Activated CD8-positive, alpha-beta T cell treated with anti-CD3 and anti-CD28 coated beads, Interleukin-2, amount 10 ng/mL, durations not matched to agents 7 days and 5 days (primary cell): ENCODE measurements at regions of chr15 and their contacts with region 1.

Region 1: DNA sequence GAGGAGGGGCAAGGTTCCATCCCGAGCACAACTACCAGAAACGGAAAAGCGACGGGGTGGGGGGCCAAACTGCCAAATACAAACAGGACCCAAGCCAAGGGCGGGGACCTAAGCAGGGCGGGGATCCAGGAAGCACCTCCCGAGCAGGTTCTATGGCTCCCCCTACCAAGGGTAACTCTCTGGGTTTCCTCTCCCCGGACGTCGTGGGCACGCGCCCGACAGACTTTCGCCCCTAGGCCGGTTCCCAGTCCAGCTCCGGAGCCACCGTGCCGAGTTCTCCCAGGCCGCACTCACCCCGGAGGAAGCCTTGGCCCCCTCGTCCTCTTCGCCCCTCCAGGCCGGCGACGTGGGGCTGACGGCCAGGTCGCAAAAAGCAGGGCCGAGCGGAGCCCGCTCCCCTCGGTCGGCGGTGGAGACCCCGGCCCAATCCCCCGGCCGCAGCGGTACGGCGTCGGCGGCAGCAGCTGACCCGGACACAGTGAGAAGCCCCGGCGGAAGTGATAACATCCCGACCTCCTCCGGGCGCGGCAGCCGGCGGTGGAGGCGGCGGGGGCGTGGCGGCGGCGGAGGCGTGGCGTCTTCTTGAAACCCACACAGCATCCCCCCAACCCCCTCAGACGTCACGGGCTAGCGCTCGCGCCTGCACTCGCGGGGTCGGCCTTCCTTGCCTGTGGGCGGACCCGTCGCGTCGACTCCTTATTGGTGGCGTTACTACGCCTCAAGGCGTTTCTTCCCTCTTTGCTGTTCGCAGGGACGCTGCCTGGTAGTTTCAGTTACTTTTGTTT is at the start of gene BNIP2:
- DNase-seq: peak; percentile 100
- ATAC-seq: peak; percentile 94
- H3K4me3 Mint-ChIP-seq: peak within 1 kb of the TSS; percentile 88
- H3K27ac Mint-ChIP-seq: peak within 1 kb of the TSS; percentile 96
- H3K4me1 Mint-ChIP-seq: peaks cover 40% of the 10 kb centered on the region
- H3K27me3 Mint-ChIP-seq: no peaks in the 10 kb centered on the region
- total RNA-seq, gene BNIP2: 69.0 to 74.8 TPM

Region 2: GRCh38 chr15:59522988-59523461 is 166.0 kb before region 1 on chr15:
- CTCF ChIA-PET with region 1: no interaction called
- POLR2A ChIA-PET with region 1: no interaction called
- DNase-seq: peak; percentile 73
- ATAC-seq: peak; percentile 52
- H3K4me3 Mint-ChIP-seq: peak overlapping the region; percentile 22
- H3K27ac Mint-ChIP-seq: no peak overlapping the region
- H3K4me1 Mint-ChIP-seq: peaks cover 26% of the 10 kb centered on the region
- H3K27me3 Mint-ChIP-seq: peaks cover 23% of the 10 kb centered on the region

Region 3: GRCh38 chr15:59656897-59657634 is 32.0 kb before region 1 on chr15 and contains the start of gene GTF2A2:
- CTCF ChIA-PET with region 1: interaction called, 9 read pairs
- POLR2A ChIA-PET with region 1: interaction called, 33 read pairs
- DNase-seq: peak; percentile 98
- ATAC-seq: peak; percentile 99
- H3K4me3 Mint-ChIP-seq: peak within 1 kb of the TSS; percentile 12
- H3K27ac Mint-ChIP-seq: peak within 1 kb of the TSS; percentile 85
- H3K4me1 Mint-ChIP-seq: peaks cover 9% of the 10 kb centered on the region
- H3K27me3 Mint-ChIP-seq: no peaks in the 10 kb centered on the region
- total RNA-seq, gene GTF2A2: 123 to 127 TPM

Region 4: DNA sequence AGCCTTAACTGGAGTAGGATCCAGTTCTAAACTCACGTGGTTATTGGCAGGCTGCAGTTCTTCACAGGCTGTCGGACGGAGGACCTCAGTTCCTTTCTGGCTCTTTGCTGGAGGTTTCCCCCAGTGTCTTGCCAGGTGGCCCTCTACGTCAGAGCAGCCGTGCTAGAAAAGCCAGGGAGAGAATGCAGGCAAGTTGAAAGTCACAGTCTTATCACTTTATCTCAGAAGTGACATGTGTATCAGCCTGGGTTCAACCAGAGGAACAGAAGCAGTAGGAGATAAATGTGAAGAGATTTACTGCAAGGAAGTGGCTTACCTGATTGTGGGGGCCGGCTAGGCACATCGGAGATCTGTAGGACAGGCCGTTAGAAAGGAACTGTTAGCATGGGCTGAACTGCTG is 125.4 kb after region 1 on chr15:
- CTCF ChIA-PET with region 1: no interaction called
- POLR2A ChIA-PET with region 1: no interaction called
- DNase-seq: peak; percentile 59
- ATAC-seq: peak; percentile 89
- H3K4me3 Mint-ChIP-seq: no peak overlapping the region
- H3K27ac Mint-ChIP-seq: peak overlapping the region; percentile 73
- H3K4me1 Mint-ChIP-seq: peaks cover 26% of the 10 kb centered on the region
- H3K27me3 Mint-ChIP-seq: peaks cover 6% of the 10 kb centered on the region

Region 5: DNA sequence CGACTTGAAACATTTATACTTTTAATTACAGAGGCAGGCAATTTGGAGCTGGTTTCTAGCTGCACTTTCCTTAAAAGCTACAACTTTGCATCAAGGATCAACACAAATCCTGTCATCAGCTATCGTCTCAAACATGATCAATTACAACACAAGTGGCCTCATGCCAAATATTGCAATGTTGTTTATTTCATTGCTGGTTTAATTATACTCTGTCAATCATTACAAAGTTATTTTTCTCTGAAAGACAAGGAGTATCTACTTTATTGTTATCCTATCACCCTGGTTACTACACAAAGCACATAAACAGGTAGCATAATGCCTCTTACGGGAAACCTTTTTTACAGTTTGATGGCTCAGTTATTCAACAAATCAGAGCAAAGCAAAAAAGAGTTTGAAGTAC is 257.1 kb after region 1 on chr15:
- CTCF ChIA-PET with region 1: no interaction called
- POLR2A ChIA-PET with region 1: no interaction called
- DNase-seq: no peak
- ATAC-seq: no peak
- H3K4me3 Mint-ChIP-seq: no peak overlapping the region
- H3K27ac Mint-ChIP-seq: no peak overlapping the region
- H3K4me1 Mint-ChIP-seq: peaks cover 15% of the 10 kb centered on the region
- H3K27me3 Mint-ChIP-seq: peaks cover 11% of the 10 kb centered on the region